Posterior vena cava (tissue), 2 donors: ENCODE measurements at regions of chr22 and their contacts with region 1.

Region 1: GRCh38 chr22:18998998-18999397 is 62.9 kb upstream of the PRODH start:
- DNase-seq: no peak

Region 2: DNA sequence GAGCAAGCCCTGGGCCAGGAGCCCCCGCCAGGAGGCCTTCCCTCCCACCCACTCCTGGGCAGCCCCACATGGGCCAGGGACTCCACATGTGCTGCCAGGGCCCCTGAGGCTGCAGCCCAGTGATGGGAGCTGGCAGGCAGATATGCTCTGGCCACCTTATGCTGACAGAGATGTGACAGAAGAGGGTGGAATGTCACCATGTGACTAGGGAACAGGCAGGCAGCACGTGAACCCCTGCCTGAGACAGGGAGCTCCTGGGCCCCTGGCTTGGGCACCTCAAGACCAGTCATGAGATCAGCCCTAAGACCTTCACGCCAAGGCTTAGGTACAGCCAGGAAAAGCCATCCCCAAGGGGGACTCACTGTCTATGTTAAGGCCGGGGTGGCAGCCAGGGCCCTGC is 72.0 kb before region 1 on chr22:
- intact Hi-C with region 1: no loop called
- DNase-seq: no peak

Region 3: GRCh38 chr22:19043121-19044055 is 44.4 kb after region 1 on chr22:
- intact Hi-C with region 1: loop called in 1 of 2 experiments (anchors 10 kb)
- DNase-seq: peak; percentile 16

Region 4: DNA sequence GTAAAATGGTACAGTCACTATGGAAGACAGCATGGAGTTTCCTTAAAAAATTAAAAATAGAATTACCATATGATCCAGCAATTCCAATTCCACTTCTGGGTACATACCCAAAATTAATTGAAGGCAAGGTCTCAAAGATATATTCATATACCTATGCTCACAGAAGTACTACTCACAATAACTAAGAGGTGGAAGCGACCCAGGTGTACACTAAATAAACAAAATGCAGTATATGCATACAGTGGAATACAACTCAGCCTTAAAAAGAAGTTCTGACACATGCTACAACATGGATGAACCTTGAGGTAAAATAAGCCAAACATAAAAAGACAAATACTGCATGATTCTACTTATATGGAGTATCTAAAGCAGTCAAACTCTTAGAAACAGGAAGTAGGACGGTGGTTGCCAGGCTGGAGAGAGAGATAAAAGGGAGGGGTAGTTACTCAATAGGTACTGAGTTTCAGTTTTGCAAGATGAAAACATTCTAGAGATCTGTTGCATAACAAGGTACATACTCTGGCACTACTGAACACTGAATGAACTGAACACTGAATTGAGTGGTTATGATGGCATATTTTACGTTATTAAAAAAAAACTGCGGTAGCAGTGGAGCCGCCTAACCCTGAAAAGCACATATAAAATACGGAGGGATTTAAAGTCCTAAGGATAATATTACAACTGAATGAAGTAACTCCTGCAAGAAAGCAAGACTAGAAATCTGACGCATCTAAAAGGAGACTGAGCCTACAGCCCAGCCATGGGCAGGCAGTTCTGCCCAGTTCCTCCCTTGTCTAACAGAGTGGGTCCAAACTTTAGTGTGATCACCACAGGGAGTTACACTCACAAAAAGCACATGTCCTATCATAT is 110.4 kb after region 1 on chr22:
- intact Hi-C with region 1: no loop called
- DNase-seq: peak; percentile 49